ENCODE measurements at regions of chr6 and their contacts with region 1.

Region 1: GRCh38 chr6:85678602-85679444 is 36.1 kb upstream of the SYNCRIP start:
- DNase-seq: peak; percentile 98 to 99
- H3K4me3 ChIP-seq: peak overlapping the region; percentile 82 to 87
- H3K27ac ChIP-seq: peak overlapping the region; percentile 89 to 91
- H3K4me1 ChIP-seq: peaks cover 0 to 31% (median 15%) of the 10 kb centered on the region in 4 donors
- H3K27me3 ChIP-seq: no peaks in the 10 kb centered on the region
- CTCF ChIP-seq: no peak

Region 2: DNA sequence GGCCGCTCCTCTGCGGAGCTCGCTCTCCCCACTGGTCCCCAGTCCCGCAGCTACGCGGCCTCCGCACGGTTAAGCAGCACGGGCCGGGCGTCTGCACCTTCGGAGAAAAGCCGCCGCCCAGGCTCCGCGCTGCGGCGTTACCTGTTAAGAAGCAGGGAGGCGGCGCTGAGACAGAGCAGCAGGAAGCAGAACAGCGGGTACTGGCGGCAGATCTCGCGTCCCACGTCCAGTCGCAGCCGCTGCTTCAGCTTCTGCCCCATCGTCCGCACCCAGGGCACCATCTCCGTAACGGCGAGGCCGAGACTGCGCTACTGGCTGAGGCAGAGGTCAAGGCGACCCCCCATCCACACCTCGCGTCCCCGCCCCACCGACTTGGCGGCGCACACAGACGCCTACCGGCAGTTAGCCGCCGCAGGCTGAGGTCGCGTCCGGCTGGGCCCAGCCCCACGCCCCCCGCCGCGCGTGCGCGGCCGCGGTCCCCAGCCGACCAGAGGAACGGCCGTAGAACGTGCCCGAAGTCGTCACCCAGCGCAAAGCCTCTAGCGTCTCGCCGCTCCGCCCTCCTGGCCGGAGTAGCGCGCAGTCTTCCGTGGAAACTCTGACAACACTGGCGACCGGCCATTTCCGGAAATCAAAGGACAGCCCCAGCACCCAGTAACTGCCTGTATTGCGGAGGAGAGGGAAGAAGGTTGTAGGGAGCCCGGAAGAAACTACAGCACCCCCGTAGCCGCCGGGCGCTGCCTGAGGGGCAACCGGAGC is 85.2 kb before region 1 on chr6 and contains the start of gene SNX14:
- intact Hi-C with region 1: loop called (anchors 10 kb)
- DNase-seq: peak; percentile 93 to 97
- H3K4me3 ChIP-seq: peak within 1 kb of the TSS; percentile 75 to 93
- H3K27ac ChIP-seq: peak within 1 kb of the TSS; percentile 91 to 93
- H3K4me1 ChIP-seq: peaks cover 0 to 31% (median 15%) of the 10 kb centered on the region in 4 donors
- H3K27me3 ChIP-seq: no peaks in the 10 kb centered on the region
- CTCF ChIP-seq: peak; percentile 11 to 19